ENCODE measurements at regions of chr2 and their contacts with region 1.

Region 1: GRCh38 chr2:170885130-170885791 is 43.8 kb upstream of the GORASP2 start:
- DNase-seq: no peak
- ATAC-seq: peak; percentile 77
- H3K4me3 ChIP-seq: no peak overlapping the region
- H3K27ac ChIP-seq: no peak overlapping the region
- H3K4me1 ChIP-seq: no peaks in the 10 kb centered on the region
- H3K27me3 ChIP-seq: no peaks in the 10 kb centered on the region
- CTCF ChIP-seq: peak in 2 of 3 experiments; percentile 26 to 29; a peak in 2 of 6 replicates
- POLR2A ChIP-seq: no peak
- RAD21 ChIP-seq: no peak

Region 2: DNA sequence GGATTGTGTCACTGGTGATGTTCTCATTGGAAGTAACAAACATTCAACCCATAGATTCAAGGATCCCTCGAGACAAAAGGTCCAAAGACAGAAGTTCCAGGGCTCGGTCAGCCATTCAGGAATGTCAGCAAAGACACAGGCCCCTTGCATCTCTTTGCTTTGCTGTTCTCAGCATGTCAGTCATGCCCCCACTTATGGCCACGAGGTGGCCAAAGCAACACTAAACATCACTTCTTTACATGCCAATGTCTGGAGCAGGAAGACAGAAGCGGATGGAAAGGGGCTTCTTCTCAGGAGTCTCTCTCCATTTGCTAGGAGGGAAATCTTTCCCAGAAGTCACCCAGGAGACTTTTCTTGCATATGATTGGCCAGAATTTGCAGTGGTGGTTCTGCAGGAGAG is 361.8 kb before region 1 on chr2:
- CTCF ChIA-PET with region 1: no interaction called
- POLR2A ChIA-PET with region 1: no interaction called
- RAD21 ChIA-PET with region 1: no interaction called
- intact Hi-C with region 1: no loop called
- DNase-seq: no peak
- ATAC-seq: 0 out of 2 replicates have a peak, but pooled peaks have one; percentile 38
- H3K4me3 ChIP-seq: no peak overlapping the region
- H3K27ac ChIP-seq: no peak overlapping the region
- H3K4me1 ChIP-seq: peaks cover 11 to 21% of the 10 kb centered on the region in 2 experiments; a peak in 3 of 4 replicates
- H3K27me3 ChIP-seq: no peaks in the 10 kb centered on the region
- CTCF ChIP-seq: peak in 2 of 3 experiments; percentile 35 to 43; a peak in 3 of 6 replicates
- POLR2A ChIP-seq: no peak
- RAD21 ChIP-seq: 0 out of 2 replicates have a peak, but pooled peaks have one; percentile 17

Region 3: DNA sequence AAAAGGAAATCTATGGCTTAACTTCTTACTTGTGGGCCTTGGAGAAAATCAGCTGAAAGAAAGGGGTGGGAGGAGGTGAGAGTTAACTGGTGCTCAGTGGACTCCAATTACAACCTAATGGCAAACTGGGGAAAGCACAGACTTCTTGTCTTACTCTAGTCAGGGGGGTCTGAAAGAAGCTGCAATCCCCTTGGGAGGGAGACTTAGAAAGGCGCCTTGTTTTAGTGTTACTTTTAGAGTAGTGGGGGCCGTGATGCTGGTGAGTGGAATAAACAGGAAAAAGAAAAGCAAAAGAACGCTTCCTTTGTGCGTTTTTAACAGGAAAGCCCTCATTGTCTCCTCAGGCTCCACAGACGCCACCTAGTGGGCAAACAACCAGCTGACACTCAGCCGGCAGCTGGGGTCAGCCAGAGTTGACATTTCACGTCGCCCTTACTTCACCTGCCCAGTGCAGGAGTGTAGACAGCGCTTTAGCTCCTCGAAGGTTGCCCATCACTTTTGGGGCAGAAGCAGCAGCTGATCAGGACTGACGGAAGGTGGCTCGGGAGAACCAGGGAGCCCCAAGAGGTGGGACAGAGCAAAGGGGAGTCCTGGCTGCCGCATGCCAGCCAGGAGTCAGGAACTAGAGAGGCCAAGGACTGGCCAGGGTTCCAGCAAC is 12.1 kb before region 1 on chr2:
- CTCF ChIA-PET with region 1: interaction called, 13 read pairs
- POLR2A ChIA-PET with region 1: interaction called, 4 read pairs
- RAD21 ChIA-PET with region 1: no interaction called
- intact Hi-C with region 1: no loop called
- DNase-seq: peak; percentile 63
- ATAC-seq: peak; percentile 99
- H3K4me3 ChIP-seq: peak overlapping the region; percentile 15 to 45; a peak in 3 of 4 replicates
- H3K27ac ChIP-seq: no peak overlapping the region
- H3K4me1 ChIP-seq: peaks cover 0 to 13% of the 10 kb centered on the region in 2 experiments; a peak in 2 of 4 replicates
- H3K27me3 ChIP-seq: no peaks in the 10 kb centered on the region
- CTCF ChIP-seq: peak; percentile 71 to 97 (median 96)
- POLR2A ChIP-seq: no peak
- RAD21 ChIP-seq: peak; percentile 67

Region 4: DNA sequence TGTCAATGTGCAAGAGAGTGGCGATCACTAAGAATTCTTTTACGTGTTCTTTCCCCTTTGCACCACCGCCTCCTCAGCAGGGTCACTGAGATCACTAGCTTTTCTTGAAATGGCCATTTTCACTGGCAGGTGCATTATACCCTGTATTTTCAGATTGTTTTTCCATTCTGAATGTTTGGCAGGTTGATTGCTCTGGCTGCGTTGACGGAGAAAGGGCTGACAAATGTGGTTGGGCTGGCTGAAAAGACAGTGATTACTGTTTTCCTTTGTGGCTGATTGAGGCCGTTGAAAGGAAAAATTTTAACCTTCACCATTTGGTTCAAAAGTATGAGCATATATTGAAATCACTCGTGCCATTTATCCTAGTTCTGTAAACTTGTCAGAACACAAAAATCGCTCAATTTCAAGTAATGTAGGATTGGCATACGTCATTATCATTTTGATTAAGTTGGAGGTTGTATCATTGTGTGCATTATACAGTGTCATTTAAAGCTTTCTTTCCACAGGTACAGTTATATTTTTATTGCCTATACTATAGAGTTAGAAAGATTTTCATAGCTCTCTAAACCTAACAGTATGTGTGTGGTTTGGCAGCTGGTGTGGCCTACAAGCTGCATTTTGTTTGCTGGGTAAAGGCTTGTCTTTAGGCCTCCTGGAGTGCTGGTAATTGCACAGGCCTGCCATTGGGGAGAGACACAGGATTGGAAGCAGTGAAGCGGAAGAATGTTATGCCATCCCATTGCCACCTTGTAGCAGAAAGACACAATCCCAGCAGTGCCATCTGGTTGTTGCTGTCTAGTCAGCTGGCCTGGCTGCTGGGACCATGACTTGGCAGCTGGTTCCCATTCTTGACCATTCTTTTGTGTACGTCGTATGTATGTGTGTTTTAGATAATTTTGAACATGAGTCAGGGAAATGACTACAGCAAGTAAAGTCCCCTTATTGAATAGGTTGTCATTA is 838.7 kb after region 1 on chr2:
- CTCF ChIA-PET with region 1: no interaction called
- POLR2A ChIA-PET with region 1: no interaction called
- RAD21 ChIA-PET with region 1: no interaction called
- intact Hi-C with region 1: no loop called
- DNase-seq: no peak
- ATAC-seq: peak; percentile 55; the same call in 1 of the 2 replicates
- H3K4me3 ChIP-seq: no peak overlapping the region
- H3K27ac ChIP-seq: no peak overlapping the region
- H3K4me1 ChIP-seq: no peaks in the 10 kb centered on the region
- H3K27me3 ChIP-seq: no peaks in the 10 kb centered on the region
- CTCF ChIP-seq: no peak
- POLR2A ChIP-seq: no peak
- RAD21 ChIP-seq: peak; percentile 11; the same call in 1 of the 2 replicates

Measured in HCT116 (cell line).